Psoas muscle (tissue), 8 donors: ENCODE measurements at regions of chr6 and their contacts with region 1.

Region 1: GRCh38 chr6:128519132-128519930 is 1.1 kb downstream of the PTPRK start:
- DNase-seq: peak; percentile 33 to 66
- ATAC-seq: peak; percentile 45 to 63 (median 56)
- H3K4me3 ChIP-seq: peak overlapping the region; percentile 91
- H3K27ac ChIP-seq: peak overlapping the region; percentile 91
- H3K4me1 ChIP-seq: peaks cover 11% of the 10 kb centered on the region
- H3K27me3 ChIP-seq: no peaks in the 10 kb centered on the region
- CTCF ChIP-seq: peak; percentile 14

Region 2: DNA sequence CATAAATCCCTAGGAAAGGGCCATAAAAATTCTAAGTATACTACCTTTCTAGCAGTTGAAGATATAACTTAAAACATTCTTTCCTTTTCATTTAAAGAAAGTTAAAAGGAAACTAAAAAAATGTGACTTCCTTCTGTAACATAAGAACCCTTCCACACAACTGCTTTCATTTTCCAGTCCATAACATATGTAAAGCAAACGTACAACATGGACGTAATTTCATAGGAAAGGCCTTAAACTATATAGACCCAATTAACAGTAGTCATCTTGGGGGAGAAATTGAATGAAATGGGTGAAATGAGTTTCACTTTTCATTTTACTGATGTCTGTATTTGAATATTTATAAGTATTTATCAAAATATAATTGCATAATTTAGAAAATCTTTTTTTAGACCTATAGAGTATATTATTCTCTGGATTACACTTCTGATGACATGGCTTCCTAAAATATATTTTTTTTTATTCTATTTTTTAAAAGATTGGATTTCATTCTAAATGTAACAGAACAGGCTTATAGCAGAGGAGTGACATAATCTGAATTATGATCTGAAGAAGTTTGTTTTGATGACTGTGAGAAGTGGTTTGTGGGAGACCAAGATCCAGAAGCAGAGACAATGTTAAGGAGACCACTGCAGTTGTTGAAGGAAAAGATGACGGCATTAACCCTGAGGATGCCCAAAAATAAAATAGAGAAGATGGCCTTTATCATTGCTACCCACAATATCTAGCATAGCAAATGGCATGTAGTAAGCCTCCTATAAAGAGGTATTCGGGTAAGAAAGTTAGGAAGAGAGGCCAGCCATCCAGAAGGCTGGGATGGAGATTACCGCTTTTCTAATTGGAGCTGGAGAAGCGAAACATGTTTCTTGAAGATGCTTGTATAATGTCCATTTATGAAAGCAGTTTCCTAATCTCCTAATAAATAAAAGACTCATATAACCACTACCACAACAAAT is 259.3 kb before region 1 on chr6:
- intact Hi-C with region 1: loop called in 1 of 2 experiments (anchors 10 kb)
- DNase-seq: no peak
- ATAC-seq: no peak
- H3K4me3 ChIP-seq: no peak overlapping the region
- H3K27ac ChIP-seq: no peak overlapping the region
- H3K4me1 ChIP-seq: no peaks in the 10 kb centered on the region
- H3K27me3 ChIP-seq: no peaks in the 10 kb centered on the region
- CTCF ChIP-seq: no peak

Region 3: DNA sequence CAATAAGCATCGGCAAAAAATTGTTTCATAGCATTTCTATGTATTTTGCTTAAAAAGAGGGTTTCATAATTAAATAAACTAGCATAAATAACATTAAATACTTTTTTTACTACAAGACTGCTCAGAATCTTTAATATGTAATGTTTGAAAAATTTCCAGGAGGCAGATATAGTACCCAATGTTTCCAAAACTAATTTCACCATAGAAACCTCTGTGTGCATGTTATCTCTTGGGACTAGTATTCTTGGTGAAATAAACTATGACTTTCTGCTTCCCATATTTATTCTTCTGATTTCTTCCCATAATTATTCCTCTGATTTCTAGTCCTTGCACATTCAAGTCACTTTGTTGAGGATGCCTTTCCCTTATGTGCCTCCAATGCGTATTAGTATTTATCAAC is 93.5 kb before region 1 on chr6:
- intact Hi-C with region 1: loop called in 1 of 2 experiments (anchors 5 kb)
- DNase-seq: no peak
- ATAC-seq: no peak
- H3K4me3 ChIP-seq: no peak overlapping the region
- H3K27ac ChIP-seq: no peak overlapping the region
- H3K4me1 ChIP-seq: peaks cover 3% of the 10 kb centered on the region
- H3K27me3 ChIP-seq: no peaks in the 10 kb centered on the region
- CTCF ChIP-seq: no peak